ENCODE measurements at regions of chr18 and their contacts with region 1.

Region 1: DNA sequence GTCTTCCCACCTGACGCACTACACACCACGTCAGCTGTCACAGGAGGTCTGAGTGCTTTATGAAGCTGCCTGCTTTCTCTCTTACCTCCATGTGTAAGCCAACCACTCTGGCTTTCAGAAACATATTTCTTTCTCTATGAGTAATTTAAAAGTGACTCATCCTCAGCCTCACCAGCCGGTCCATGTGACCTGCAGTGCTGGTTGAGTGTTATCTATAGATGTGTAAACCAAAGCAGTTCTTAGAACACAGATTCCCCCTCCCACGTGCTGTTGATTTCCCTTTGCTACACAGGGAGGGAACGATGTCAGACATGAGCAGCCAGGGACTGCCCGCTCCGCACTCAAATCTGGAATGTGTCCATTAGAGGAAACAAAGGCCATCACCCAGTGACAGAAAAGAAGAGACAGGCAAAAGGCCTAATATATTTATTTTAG is 157.8 kb downstream of the BCL2 start:
- DNase-seq: peak; percentile 48
- ATAC-seq: peak; percentile 62
- H3K4me3 Mint-ChIP-seq: peak overlapping the region; percentile 84
- H3K27ac Mint-ChIP-seq: peak overlapping the region; percentile 99
- H3K4me1 Mint-ChIP-seq: peaks cover 91% of the 10 kb centered on the region
- H3K27me3 Mint-ChIP-seq: no peaks in the 10 kb centered on the region
- CTCF ChIP-seq: no peak

Region 2: DNA sequence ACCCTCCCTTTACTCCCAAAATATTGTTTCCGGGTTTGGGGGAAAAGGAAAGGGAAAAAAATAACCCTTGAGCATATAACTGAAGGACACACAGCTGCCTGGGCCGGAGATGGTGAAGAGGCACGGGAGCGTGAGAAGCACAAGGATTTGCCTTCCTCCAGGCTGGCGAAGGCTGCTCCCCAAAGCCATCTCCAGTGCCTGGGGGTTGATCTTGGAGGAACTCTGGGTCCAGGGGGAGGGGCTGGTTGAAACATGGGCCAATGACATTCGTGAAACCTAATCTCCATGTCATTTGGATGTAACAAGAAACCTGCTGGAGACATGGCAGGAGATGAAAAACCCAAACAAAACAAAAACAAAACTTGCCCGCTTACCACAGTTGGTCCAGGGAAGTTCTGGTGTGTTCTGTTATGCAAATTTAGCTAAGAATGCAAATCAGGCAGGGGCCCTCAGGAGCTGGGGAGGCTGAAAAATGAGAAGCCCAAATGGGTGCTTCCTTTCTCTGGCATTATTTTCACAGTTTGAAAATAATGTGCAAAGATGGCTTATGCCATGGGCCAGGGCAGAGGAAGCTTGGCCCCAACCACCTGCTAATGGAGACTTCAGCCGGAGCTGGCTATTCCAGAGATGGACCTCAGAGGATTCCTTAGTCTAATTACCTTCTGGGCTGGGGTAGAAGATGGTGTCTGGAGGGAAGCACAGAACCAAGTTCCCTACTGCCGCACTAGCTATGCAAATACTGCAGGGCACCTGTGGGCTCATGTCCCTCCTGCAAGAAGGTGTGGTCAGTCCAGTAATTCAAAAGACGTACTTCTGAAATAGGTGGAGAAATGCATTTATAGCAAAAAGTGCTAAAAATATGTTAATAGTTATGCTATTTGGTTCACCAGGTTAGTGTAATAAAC is 23.1 kb before region 1 on chr18:
- CTCF ChIA-PET with region 1: interaction called, 48 read pairs
- POLR2A ChIA-PET with region 1: interaction called, 180 read pairs
- intact Hi-C with region 1: no loop called
- DNase-seq: no peak
- ATAC-seq: peak; percentile 47
- H3K4me3 Mint-ChIP-seq: peak overlapping the region; percentile 82
- H3K27ac Mint-ChIP-seq: peak overlapping the region; percentile 90
- H3K4me1 Mint-ChIP-seq: peaks cover 86% of the 10 kb centered on the region
- H3K27me3 Mint-ChIP-seq: no peaks in the 10 kb centered on the region
- CTCF ChIP-seq: no peak

Region 3: DNA sequence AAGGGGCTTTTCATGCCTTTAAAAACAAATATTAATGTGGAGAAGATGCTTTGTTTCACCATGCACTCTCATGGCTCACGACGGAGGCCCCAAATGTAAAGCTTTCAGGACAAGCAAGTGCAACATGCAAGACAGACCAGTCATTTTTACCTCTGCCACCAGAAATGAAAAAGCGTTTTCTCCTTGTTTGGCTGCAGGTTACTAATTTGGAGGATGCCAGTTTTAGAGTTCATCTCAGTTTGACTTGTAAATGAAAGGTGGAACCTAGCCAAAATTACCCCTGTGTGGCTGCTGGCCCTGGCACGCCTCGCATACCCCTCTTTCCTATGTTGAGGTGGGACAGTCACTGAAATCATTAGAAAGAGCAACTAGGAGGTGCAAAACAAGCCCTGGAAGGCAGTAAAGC is 19.2 kb after region 1 on chr18:
- CTCF ChIA-PET with region 1: interaction called, 4 read pairs
- POLR2A ChIA-PET with region 1: interaction called, 52 read pairs
- intact Hi-C with region 1: loop called (anchors 1 kb)
- DNase-seq: no peak
- ATAC-seq: peak; percentile 5
- H3K4me3 Mint-ChIP-seq: peak overlapping the region; percentile 72
- H3K27ac Mint-ChIP-seq: peak overlapping the region; percentile 82
- H3K4me1 Mint-ChIP-seq: peaks cover 94% of the 10 kb centered on the region
- H3K27me3 Mint-ChIP-seq: no peaks in the 10 kb centered on the region
- CTCF ChIP-seq: no peak

Region 4: DNA sequence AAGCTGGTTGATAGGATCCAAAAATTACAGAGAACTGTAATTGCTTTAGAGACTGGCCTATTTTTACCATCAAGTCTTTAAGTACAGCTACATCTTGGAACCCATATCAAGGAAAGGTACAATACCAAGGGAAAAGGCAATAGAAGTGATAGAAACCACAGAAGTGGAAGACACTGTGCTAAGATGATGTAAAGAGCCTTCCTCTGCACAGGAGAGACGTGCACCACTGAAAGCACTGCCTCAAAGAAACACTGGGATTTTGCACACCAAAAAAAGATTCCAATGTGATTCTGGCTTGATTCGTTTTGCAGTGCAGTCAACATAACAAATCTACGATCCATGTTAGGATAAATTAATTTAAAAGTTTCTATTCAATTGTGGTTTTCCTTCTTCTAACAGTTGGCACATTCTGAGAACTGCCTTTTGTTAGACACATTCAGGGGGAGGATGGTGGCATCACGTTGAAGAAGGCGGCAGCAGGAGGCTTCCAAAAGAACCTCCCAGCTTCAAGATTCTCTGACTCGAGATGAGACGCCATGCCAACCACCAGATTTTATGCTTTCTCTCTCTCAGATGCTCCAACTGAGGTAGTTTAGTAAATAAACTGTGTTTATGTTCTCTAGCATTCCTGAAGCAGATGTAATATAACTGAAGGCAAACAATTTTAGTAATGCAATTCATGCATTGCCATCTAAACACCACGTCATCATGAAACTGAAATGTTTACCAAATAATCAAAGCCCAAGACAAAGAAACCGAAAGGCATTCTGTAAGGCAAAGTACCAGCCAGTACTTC is 54.9 kb after region 1 on chr18:
- CTCF ChIA-PET with region 1: no interaction called
- POLR2A ChIA-PET with region 1: no interaction called
- intact Hi-C with region 1: no loop called
- DNase-seq: no peak
- ATAC-seq: no peak
- H3K4me3 Mint-ChIP-seq: no peak overlapping the region
- H3K27ac Mint-ChIP-seq: peak overlapping the region; percentile 52
- H3K4me1 Mint-ChIP-seq: peaks cover 70% of the 10 kb centered on the region
- H3K27me3 Mint-ChIP-seq: no peaks in the 10 kb centered on the region
- CTCF ChIP-seq: no peak

Region 5: DNA sequence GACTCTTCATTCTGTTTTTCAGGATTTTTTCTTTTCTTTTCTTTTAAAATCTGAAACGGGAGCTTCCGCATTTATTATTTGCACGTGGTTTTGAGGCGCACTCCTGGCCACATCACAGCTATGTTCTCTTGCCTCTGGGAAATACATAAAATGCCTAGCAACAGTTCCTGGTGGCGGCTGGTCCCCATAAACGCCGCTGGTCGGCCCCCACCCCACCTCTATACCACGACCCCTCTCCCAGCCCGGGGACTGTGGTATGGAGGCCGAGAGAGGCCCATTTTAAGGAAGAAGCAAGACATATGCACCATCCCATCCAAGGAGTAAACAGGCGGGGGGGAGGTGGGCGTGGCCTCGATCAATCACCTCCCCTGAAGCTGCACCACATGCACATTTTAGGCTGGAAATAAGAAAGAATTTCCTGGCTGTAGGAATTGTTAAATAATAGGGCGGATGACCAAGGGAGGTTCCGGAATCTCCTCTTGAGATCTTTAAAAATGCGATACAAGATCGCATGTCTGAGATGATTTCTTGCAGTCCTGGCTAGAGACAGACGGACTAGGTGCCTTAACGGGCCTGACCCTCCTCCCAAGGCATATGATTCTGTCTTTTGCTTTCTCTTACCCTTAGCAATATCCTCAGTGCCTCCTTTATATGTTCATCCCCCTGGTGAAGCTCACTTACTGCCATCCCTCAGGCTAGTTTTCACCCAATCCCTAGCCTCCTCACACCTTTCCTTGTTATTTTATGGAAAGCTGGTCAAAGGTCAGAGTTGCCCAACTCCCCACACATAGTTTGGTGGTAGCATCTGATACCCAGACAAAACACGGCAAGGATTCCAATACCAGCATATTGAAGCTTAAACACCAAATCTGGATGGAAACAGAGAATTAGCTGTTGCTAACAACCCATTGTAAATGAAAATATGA is 75.4 kb after region 1 on chr18:
- CTCF ChIA-PET with region 1: no interaction called
- POLR2A ChIA-PET with region 1: no interaction called
- intact Hi-C with region 1: no loop called
- DNase-seq: no peak
- ATAC-seq: no peak
- H3K4me3 Mint-ChIP-seq: no peak overlapping the region
- H3K27ac Mint-ChIP-seq: no peak overlapping the region
- H3K4me1 Mint-ChIP-seq: peaks cover 42% of the 10 kb centered on the region
- H3K27me3 Mint-ChIP-seq: no peaks in the 10 kb centered on the region
- CTCF ChIP-seq: no peak

Region 6: GRCh38 chr18:63284827-63285733 is 123.3 kb after region 1 on chr18:
- CTCF ChIA-PET with region 1: no interaction called
- POLR2A ChIA-PET with region 1: interaction called, 12 read pairs
- intact Hi-C with region 1: loop called (anchors 1 kb)
- DNase-seq: peak; percentile 28
- ATAC-seq: peak; percentile 86
- H3K4me3 Mint-ChIP-seq: peak overlapping the region; percentile 81
- H3K27ac Mint-ChIP-seq: no peak overlapping the region
- H3K4me1 Mint-ChIP-seq: peaks cover 21% of the 10 kb centered on the region
- H3K27me3 Mint-ChIP-seq: no peaks in the 10 kb centered on the region
- CTCF ChIP-seq: no peak

Region 7: DNA sequence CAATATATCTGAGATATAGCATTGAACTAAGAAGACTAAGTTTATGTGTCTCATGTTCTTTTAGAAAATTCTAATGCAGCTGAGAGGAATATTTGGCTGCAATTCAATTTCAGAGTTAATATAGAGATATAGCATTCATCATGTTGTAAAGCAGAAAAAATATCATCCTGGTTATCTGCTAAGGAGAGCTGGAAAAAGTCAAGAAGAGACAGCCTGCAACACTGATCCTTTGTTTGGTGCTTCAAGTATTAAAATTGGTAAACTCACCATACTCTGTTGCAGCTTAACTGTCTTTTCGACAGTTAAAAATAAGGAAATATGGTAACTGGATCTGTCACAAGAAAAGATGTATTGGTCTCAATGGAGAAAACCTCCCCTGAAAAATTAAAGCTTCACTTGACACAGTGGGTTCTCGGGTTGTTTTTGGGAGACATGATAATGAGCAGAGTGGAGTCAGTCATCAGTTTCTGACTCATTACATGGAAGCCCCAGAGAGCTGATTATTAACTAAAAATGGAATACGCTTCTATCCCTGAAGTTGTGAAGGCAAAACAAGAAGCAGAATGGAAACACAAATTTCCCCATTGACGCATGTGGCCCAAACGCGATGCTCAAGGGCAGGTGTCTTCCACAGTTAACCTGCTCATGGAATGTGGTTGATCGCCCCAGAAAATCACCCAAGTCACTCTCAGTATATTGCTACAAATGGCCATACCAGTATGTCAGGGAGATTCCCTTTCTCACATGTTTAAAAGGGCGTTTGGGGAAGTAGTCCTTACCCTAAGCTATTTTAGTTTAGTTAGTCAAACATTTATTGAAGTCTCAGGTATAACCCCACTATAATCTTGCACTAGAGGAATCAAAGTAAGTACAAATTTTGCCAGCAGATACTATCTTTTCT is 149.6 kb after region 1 on chr18:
- CTCF ChIA-PET with region 1: interaction called, 9 read pairs
- POLR2A ChIA-PET with region 1: interaction called, 123 read pairs
- intact Hi-C with region 1: loop called (anchors 1 kb)
- DNase-seq: peak; percentile 46
- ATAC-seq: peak; percentile 73
- H3K4me3 Mint-ChIP-seq: peak overlapping the region; percentile 77
- H3K27ac Mint-ChIP-seq: peak overlapping the region; percentile 96
- H3K4me1 Mint-ChIP-seq: peaks cover 94% of the 10 kb centered on the region
- H3K27me3 Mint-ChIP-seq: no peaks in the 10 kb centered on the region
- CTCF ChIP-seq: no peak

Region 8: DNA sequence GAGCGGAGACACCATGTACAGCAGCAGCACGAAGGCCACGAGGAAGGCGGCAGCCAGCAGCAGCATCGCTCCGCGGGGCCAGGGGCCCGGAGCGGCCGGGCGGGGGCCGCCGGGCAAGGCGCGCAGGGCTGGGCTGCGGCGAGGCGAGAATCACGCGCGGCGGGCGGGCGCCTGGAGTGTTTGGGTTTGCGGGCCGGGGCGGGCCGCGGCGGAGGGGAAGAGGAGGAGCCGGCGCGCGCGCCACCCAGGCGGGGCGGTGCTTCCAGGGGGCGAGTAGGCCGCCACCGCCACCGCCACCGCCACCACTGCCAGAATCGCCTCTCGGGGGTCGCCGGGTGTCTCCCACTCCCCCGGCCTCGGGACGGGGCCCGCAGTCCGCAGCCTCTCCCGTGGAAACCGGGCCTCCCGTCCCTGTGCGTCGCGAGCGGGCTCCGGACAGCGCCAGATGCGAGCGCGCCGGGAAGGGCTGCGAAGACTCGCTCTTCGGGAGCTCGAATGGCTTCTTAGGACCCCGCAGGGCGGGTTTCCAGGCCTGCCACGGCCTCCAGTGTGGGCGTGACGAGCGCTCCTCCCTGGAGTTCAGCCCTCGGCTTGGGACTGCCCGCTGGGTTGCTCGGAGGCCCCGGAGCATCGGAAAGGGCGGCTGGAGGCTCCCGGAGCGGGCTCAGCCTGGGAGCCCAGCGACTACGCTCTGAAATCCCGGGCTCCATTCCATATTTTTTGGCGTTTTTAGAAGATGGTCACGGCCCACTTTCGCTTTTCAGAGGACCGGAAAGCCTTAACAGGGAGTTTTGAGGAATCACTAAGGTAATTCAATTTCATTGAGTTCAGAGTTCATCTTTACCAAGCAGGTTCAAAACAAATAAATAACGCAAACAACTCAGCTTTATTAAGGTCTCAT is 205.5 kb after region 1 on chr18 and contains the start of gene KDSR:
- CTCF ChIA-PET with region 1: no interaction called
- POLR2A ChIA-PET with region 1: no interaction called
- intact Hi-C with region 1: no loop called
- DNase-seq: peak; percentile 88
- ATAC-seq: peak; percentile 92
- H3K4me3 Mint-ChIP-seq: peak within 1 kb of the TSS; percentile 88
- H3K27ac Mint-ChIP-seq: peak within 1 kb of the TSS; percentile 71
- H3K4me1 Mint-ChIP-seq: peaks cover 23% of the 10 kb centered on the region
- H3K27me3 Mint-ChIP-seq: no peaks in the 10 kb centered on the region
- CTCF ChIP-seq: no peak
- total RNA-seq, gene KDSR: 15.0 and 15.3 TPM in 2 replicates